T-cell (primary cell): ENCODE measurements at regions of chr16 and their contacts with region 1.

Region 1: GRCh38 chr16:66277311-66278070 is 89.0 kb upstream of the CDH5 start:
- DNase-seq: peak in 1 of 35 experiments; percentile 13
- ATAC-seq: no peak
- H3K4me3 ChIP-seq: no peak overlapping the region
- H3K4me3 Mint-ChIP-seq: no peak overlapping the region
- H3K27ac ChIP-seq: no peak overlapping the region
- H3K27ac Mint-ChIP-seq: no peak overlapping the region
- H3K4me1 ChIP-seq: peaks cover 0 to 5% of the 10 kb centered on the region in 2 experiments
- H3K4me1 Mint-ChIP-seq: peaks cover 6 to 16% (median 7%) of the 10 kb centered on the region in 3 donors
- H3K27me3 ChIP-seq: peaks cover 2 to 34% of the 10 kb centered on the region in 2 experiments
- H3K27me3 Mint-ChIP-seq: peaks cover 18 to 26% of the 10 kb centered on the region in 2 donors

Region 2: GRCh38 chr16:66335704-66336329 is 58.3 kb after region 1 on chr16:
- CTCF ChIA-PET with region 1: no interaction called
- POLR2A ChIA-PET with region 1: no interaction called
- DNase-seq: no peak
- ATAC-seq: no peak
- H3K4me3 ChIP-seq: no peak overlapping the region
- H3K4me3 Mint-ChIP-seq: no peak overlapping the region
- H3K27ac ChIP-seq: no peak overlapping the region
- H3K27ac Mint-ChIP-seq: no peak overlapping the region
- H3K4me1 ChIP-seq: no peaks in the 10 kb centered on the region
- H3K4me1 Mint-ChIP-seq: no peaks in the 10 kb centered on the region
- H3K27me3 ChIP-seq: peaks cover 0 to 34% of the 10 kb centered on the region in 2 experiments
- H3K27me3 Mint-ChIP-seq: peaks cover 25 to 27% of the 10 kb centered on the region in 2 donors

Region 3: GRCh38 chr16:66363211-66363777 is 85.8 kb after region 1 on chr16:
- CTCF ChIA-PET with region 1: interaction called in 1 of 2 experiments, 7 read pairs
- POLR2A ChIA-PET with region 1: interaction called in 1 of 2 experiments, 12 read pairs
- DNase-seq: no peak
- ATAC-seq: no peak
- H3K4me3 ChIP-seq: no peak overlapping the region
- H3K4me3 Mint-ChIP-seq: no peak overlapping the region
- H3K27ac ChIP-seq: no peak overlapping the region
- H3K27ac Mint-ChIP-seq: no peak overlapping the region
- H3K4me1 ChIP-seq: peaks cover 0 to 12% of the 10 kb centered on the region in 2 experiments
- H3K4me1 Mint-ChIP-seq: peaks cover 4 to 5% (median 4%) of the 10 kb centered on the region in 3 donors
- H3K27me3 ChIP-seq: peaks cover 0 to 85% of the 10 kb centered on the region in 2 experiments
- H3K27me3 Mint-ChIP-seq: peaks cover 39 to 56% of the 10 kb centered on the region in 2 donors